ENCODE measurements at regions of chr9 and their contacts with region 1.

Region 1: GRCh38 chr9:122144836-122145591 is 14.6 kb downstream of the NDUFA8 start:
- DNase-seq: peak; percentile 20
- ATAC-seq: peak; percentile 71
- H3K4me3 ChIP-seq: no peak overlapping the region
- H3K27ac ChIP-seq: no peak overlapping the region
- H3K4me1 ChIP-seq: peaks cover 39% of the 10 kb centered on the region
- H3K27me3 ChIP-seq: no peaks in the 10 kb centered on the region
- CTCF ChIP-seq: peak; percentile 59
- EP300 ChIP-seq: no peak
- POLR2A ChIP-seq: no peak
- RAD21 ChIP-seq: 0 out of 2 replicates have a peak, but pooled peaks have one; percentile 38

Region 2: GRCh38 chr9:122125158-122125508 is 19.9 kb before region 1 on chr9:
- CTCF ChIA-PET with region 1: interaction called, 5 read pairs
- POLR2A ChIA-PET with region 1: no interaction called
- in situ Hi-C with region 1: no loop called
- intact Hi-C with region 1: loop called (anchors 1 kb)
- DNase-seq: peak; percentile 53
- ATAC-seq: peak; percentile 84
- H3K4me3 ChIP-seq: peak overlapping the region in 2 of 3 experiments; percentile 21 to 64; a peak in 2 of 6 replicates
- H3K27ac ChIP-seq: no peak overlapping the region
- H3K4me1 ChIP-seq: peaks cover 17% of the 10 kb centered on the region
- H3K27me3 ChIP-seq: peaks cover 0 to 5% of the 10 kb centered on the region in 2 experiments; a peak in 1 of 5 replicates
- CTCF ChIP-seq: peak; percentile 99
- EP300 ChIP-seq: no peak
- POLR2A ChIP-seq: no peak
- RAD21 ChIP-seq: peak; percentile 98

Region 3: DNA sequence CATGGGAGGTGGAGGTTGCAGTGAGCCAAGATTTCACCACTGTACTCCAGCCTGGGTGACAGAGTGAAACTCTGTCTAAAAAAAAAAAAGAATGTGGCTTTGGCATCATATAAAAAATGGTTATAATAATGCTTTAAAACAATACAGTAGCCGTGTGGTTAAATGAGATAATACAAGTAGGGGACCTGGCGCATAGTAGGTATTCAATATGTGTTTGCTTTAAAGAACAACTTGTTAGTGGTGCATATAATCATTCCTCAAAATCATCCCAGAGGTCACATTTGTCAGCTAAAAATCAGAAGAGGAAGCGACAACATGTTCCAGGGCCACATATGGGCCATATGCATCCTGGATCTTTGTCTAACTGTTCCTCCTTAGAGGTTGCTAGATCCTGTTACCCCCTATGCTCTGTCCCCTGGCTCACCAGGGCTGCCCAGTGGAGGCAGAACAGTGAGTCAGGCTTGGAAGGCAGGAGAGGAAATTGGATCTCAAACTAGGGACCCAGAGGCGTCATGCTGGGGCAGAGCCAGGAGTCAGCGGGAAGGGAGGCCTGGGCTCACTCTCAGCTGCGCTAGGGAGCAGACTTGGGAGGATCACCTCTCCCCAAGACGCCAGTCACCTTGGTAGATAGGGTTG is 56.1 kb after region 1 on chr9:
- CTCF ChIA-PET with region 1: no interaction called
- POLR2A ChIA-PET with region 1: no interaction called
- in situ Hi-C with region 1: loop called (anchors 5 kb)
- intact Hi-C with region 1: no loop called
- DNase-seq: no peak
- ATAC-seq: no peak
- H3K4me3 ChIP-seq: no peak overlapping the region
- H3K27ac ChIP-seq: no peak overlapping the region
- H3K4me1 ChIP-seq: peaks cover 20% of the 10 kb centered on the region
- H3K27me3 ChIP-seq: no peaks in the 10 kb centered on the region
- CTCF ChIP-seq: no peak
- EP300 ChIP-seq: no peak
- POLR2A ChIP-seq: no peak
- RAD21 ChIP-seq: no peak